Activated naive CD4-positive, alpha-beta T cell treated with anti-CD3 and anti-CD28 coated beads for 36 hours (primary cell): ENCODE measurements at regions of chr1 and their contacts with region 1.

Region 1: DNA sequence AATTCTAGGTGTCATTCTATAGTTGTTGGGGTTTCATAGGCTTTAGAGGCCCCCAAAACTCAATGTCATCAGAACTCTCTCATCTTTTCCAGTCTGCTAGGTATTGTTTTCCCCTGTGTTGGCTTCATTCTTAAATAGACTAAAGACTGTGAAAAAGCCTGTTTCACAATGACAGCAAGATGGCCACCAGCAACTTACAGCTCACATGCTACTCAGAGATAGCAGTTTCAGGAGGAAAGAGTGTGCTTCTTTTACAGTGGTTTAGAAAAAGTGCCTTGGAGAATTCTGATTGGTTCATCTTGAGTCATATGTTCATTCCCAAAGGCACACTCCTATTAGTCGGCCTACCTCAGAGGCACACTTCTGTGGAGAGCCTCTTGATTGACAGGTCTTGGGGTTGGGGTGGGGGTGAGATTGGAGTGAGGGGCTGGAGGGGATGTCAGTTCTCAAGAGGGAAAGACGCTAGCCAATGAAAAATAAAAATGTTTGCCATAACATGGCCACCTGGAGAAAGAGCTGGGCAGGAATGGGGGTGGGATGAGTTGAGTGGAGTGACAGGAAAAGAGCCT is 8.5 kb downstream of the IL23R start:
- DNase-seq: peak; percentile 63
- H3K4me3 Mint-ChIP-seq: peak overlapping the region; percentile 7
- H3K27ac Mint-ChIP-seq: peak overlapping the region; percentile 99
- H3K4me1 Mint-ChIP-seq: peaks cover 81% of the 10 kb centered on the region
- H3K27me3 Mint-ChIP-seq: no peaks in the 10 kb centered on the region

Region 2: GRCh38 chr1:66182551-66183178 is 992.1 kb before region 1 on chr1:
- CTCF ChIA-PET with region 1: no interaction called
- intact Hi-C with region 1: loop called (anchors 2 kb)
- DNase-seq: peak; percentile 79
- H3K4me3 Mint-ChIP-seq: no peak overlapping the region
- H3K27ac Mint-ChIP-seq: peak overlapping the region; percentile 13
- H3K4me1 Mint-ChIP-seq: peaks cover 33% of the 10 kb centered on the region
- H3K27me3 Mint-ChIP-seq: no peaks in the 10 kb centered on the region

Region 3: GRCh38 chr1:66929999-66930822 is 244.6 kb before region 1 on chr1:
- CTCF ChIA-PET with region 1: no interaction called
- intact Hi-C with region 1: loop called (anchors 1 kb)
- DNase-seq: peak; percentile 92
- H3K4me3 Mint-ChIP-seq: peak overlapping the region; percentile 84
- H3K27ac Mint-ChIP-seq: peak overlapping the region; percentile 92
- H3K4me1 Mint-ChIP-seq: peaks cover 51% of the 10 kb centered on the region
- H3K27me3 Mint-ChIP-seq: no peaks in the 10 kb centered on the region

Region 4: DNA sequence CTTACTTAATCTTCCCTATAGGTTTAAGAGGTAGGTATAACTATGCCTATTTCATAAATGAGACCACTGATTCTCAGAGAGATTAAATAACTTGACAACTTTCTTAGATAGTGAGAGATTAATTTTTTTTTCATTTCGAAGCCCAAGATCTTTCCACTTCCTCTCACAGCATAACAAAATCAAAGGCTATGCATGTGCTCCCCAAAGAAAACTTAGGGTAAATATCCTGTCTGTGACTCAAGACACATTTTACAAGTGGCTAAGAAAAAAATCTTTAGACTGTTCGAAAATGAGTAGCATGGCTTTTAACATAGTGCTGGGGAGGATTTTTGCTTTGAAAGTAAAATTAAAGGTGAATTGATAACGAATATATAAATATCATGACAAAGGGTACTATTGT is 31.9 kb before region 1 on chr1:
- CTCF ChIA-PET with region 1: no interaction called
- intact Hi-C with region 1: loop called (anchors 2 kb)
- DNase-seq: no peak
- H3K4me3 Mint-ChIP-seq: no peak overlapping the region
- H3K27ac Mint-ChIP-seq: peak overlapping the region; percentile 47
- H3K4me1 Mint-ChIP-seq: peaks cover 29% of the 10 kb centered on the region
- H3K27me3 Mint-ChIP-seq: no peaks in the 10 kb centered on the region

Region 5: DNA sequence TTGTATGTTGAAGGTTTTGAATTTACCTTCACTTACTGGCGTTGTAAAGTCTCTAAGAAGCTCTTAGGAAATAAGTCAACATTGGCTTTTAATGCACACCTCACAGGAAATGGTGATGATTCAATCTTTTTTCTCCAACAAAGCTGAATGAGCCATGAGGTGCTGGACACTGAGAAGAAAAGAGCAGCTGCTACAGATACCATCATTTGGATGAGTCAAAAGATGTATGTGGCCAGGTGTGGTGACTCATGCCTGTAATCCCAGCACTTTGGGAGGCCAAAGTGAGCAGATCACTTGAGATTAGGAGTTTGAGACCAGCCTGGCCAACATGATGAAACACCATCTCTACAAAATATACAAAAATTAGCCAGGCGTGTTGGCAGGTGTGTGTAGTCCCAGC is 11.8 kb before region 1 on chr1:
- CTCF ChIA-PET with region 1: interaction called, 3 read pairs
- intact Hi-C with region 1: loop called (anchors 1 kb)
- DNase-seq: peak; percentile 76
- H3K4me3 Mint-ChIP-seq: peak overlapping the region; percentile 42
- H3K27ac Mint-ChIP-seq: peak overlapping the region; percentile 83
- H3K4me1 Mint-ChIP-seq: peaks cover 63% of the 10 kb centered on the region
- H3K27me3 Mint-ChIP-seq: no peaks in the 10 kb centered on the region

Region 6: DNA sequence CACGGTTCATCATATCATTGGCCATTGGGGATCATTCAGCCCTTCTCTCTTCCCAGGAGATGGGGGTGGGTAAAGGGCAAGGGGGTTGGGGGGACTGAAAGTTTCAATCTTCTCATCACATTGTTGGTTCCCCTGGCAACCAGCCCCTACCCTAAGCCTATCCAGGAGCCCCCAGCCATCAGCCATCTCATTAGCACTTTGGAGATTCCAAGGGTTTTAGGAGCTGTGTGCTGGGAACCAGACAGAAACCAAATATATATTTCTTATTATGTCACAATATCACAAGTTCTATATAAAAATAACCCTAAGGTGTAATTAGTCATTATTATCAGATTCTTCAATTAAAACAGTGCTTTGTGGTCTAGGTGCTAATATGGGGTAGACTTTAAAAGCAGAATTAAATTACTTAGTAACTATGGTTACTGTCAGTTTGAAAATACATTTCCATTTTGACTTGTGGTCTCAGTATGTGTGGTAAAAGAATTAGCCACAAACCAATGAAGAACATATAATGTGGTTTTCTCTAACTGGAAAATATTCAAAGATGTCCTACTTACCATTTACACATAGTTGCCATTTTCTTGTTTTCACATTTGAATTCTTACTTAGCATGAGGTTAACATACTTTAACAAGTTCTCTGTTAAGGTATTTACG is 19.5 kb after region 1 on chr1:
- CTCF ChIA-PET with region 1: interaction called, 6 read pairs
- intact Hi-C with region 1: loop called (anchors 1 kb)
- DNase-seq: no peak
- H3K4me3 Mint-ChIP-seq: no peak overlapping the region
- H3K27ac Mint-ChIP-seq: no peak overlapping the region
- H3K4me1 Mint-ChIP-seq: peaks cover 39% of the 10 kb centered on the region
- H3K27me3 Mint-ChIP-seq: no peaks in the 10 kb centered on the region

Region 7: GRCh38 chr1:67304023-67304422 is 129.2 kb after region 1 on chr1:
- CTCF ChIA-PET with region 1: no interaction called
- intact Hi-C with region 1: loop called (anchors 1 kb)
- DNase-seq: no peak
- H3K4me3 Mint-ChIP-seq: no peak overlapping the region
- H3K27ac Mint-ChIP-seq: peak overlapping the region; percentile 86
- H3K4me1 Mint-ChIP-seq: peaks cover 23% of the 10 kb centered on the region
- H3K27me3 Mint-ChIP-seq: no peaks in the 10 kb centered on the region